Breast epithelium (tissue), 4 donors: ENCODE measurements at regions of chr5 and their contacts with region 1.

Region 1: DNA sequence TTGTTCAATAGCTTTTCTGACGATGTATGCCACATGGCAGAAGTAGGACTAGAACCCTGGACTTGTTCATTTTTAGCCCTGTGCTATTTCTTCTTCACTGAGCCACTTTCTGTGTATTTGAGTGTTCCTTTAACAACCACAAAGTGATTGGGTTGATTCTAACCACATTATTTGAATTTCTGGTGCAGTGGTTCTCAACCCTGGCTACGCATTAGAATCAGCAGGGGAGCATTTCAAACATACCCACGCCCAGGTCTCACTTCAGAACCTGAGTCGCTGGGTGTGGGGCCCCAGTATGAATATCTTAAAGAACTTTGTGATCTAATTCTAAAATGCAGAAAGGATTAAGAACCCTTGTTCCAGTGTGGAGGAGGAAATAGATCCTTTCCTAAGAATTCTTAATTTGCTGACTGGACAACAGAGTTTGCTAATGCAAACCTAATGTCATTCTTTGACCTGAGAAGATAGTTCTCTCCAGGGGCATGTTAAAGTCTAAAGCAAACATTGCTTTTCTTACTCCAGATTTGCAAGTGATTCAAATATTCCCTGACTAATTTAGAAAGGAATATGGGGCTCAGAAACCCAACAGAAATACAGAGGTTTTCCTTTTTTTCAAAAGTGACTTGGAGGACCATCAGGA is 75.4 kb upstream of the GDNF start:
- DNase-seq: no peak
- H3K4me3 ChIP-seq: no peak overlapping the region
- H3K27ac ChIP-seq: no peak overlapping the region
- H3K4me1 ChIP-seq: no peaks in the 10 kb centered on the region
- H3K27me3 ChIP-seq: no peaks in the 10 kb centered on the region
- CTCF ChIP-seq: no peak
- POLR2A ChIP-seq: no peak

Region 2: GRCh38 chr5:37799865-37800421 is 115.3 kb before region 1 on chr5:
- intact Hi-C with region 1: no loop called
- DNase-seq: no peak
- H3K4me3 ChIP-seq: no peak overlapping the region
- H3K27ac ChIP-seq: no peak overlapping the region
- H3K4me1 ChIP-seq: no peaks in the 10 kb centered on the region
- H3K27me3 ChIP-seq: no peaks in the 10 kb centered on the region
- CTCF ChIP-seq: no peak
- POLR2A ChIP-seq: no peak

Region 3: DNA sequence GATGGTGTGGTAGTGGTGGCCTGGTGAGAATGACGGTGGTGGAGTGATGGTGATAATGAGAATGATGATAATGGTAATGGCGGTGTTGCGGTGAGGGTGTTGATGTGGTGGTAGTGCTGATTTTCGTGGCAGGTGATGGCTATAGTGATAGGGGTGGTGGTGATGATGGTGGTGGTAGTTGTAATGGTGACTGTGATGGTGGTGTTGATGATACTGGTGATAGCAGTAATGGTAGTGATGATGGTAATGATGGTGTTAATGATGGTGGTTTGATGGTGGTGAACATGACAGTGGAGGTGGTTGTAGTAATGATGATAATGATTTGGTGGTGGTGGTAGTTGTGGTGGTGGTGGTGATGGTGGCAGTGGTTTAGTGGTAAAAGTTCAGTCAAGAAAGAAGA is 35.5 kb before region 1 on chr5:
- intact Hi-C with region 1: loop called (anchors 1 kb)
- DNase-seq: no peak
- H3K4me3 ChIP-seq: no peak overlapping the region
- H3K27ac ChIP-seq: no peak overlapping the region
- H3K4me1 ChIP-seq: no peaks in the 10 kb centered on the region
- H3K27me3 ChIP-seq: no peaks in the 10 kb centered on the region
- CTCF ChIP-seq: no peak
- POLR2A ChIP-seq: no peak

Region 4: GRCh38 chr5:37900692-37901091 is 14.5 kb before region 1 on chr5:
- intact Hi-C with region 1: loop called (anchors 1 kb)
- DNase-seq: no peak
- H3K4me3 ChIP-seq: no peak overlapping the region
- H3K27ac ChIP-seq: no peak overlapping the region
- H3K4me1 ChIP-seq: no peaks in the 10 kb centered on the region
- H3K27me3 ChIP-seq: no peaks in the 10 kb centered on the region
- CTCF ChIP-seq: no peak
- POLR2A ChIP-seq: no peak

Region 5: DNA sequence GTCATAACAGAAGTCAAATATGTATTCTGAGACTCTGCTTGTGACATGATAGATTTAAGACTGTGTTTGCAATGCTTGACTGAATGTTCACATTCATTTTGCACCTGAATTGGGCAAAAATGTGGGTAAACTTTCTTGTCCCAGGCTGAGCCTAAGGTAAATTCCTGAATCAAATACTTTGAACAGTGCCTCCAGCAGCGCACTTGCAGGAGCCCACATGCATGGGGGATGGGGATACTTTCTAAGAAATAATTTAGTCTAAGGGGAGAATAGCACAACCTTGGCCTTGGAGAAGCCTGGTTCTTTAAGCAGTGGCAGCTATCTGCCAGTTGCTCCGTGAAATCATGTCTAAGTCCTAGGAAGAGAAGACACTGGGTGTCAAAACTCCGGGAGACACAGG is 179.7 kb after region 1 on chr5:
- intact Hi-C with region 1: no loop called
- DNase-seq: no peak
- H3K4me3 ChIP-seq: no peak overlapping the region
- H3K27ac ChIP-seq: no peak overlapping the region
- H3K4me1 ChIP-seq: no peaks in the 10 kb centered on the region
- H3K27me3 ChIP-seq: peaks cover 0 to 7% of the 10 kb centered on the region in 2 donors
- CTCF ChIP-seq: no peak
- POLR2A ChIP-seq: no peak